B cell (primary cell): ENCODE measurements at regions of chr11 and their contacts with region 1.

Region 1: GRCh38 chr11:78574386-78575381 is at the start of gene NARS2:
- DNase-seq: peak; percentile 97
- ATAC-seq: peak; percentile 98
- H3K4me3 ChIP-seq: peak within 1 kb of the TSS; percentile 67 to 96 (median 79)
- H3K4me3 Mint-ChIP-seq: peak within 1 kb of the TSS; percentile 100
- H3K27ac ChIP-seq: peak within 1 kb of the TSS; percentile 80 to 92
- H3K27ac Mint-ChIP-seq: peak within 1 kb of the TSS; percentile 98
- H3K4me1 ChIP-seq: peaks cover 27 to 30% of the 10 kb centered on the region in 2 donors
- H3K4me1 Mint-ChIP-seq: peaks cover 47% of the 10 kb centered on the region
- H3K27me3 ChIP-seq: no peaks in the 10 kb centered on the region
- H3K27me3 Mint-ChIP-seq: no peaks in the 10 kb centered on the region
- CTCF ChIP-seq: no peak
- total RNA-seq, gene NARS2: 14.6 and 16.0 TPM in 2 replicates

Region 2: DNA sequence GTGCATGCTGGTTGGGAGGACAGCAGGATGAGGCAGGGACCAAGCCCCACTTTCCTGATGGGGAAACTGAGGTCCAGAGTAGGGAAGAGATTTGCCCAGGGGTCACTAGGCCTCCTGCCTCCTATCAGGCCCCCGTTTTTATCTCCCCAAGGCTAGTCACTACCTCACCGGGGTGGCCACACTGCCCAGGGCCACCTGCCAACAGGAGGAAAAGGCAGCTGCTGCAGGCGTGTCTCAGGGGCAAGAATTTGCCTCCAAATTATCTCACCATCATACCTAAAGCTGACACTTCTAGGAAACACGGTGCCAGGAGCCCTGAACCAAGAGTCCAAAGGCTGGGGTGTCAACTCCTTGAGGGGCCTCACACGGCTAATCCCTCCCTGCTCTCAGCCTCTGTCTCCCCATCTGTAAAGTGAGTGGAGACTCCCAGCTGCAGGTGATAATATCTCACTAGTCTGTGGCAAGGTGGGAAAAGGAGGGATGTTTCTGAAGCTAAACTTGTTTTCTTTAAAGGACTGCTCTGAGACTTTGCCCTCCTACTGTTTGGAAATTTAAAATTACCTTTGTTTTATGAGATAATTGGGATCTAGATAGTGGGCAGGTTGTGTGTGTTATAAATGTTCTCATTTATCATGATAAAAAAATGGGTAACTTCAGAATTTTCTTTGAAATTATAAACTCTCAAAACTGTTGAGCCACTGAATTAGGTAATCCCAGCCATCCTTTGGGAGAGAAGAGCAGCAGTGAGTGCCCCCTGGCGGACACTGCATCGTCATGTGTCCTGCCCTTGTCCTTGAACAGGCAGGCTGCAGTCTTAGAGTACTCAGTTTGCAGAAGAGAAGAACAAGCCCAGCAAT is 1386.7 kb before region 1 on chr11:
- CTCF ChIA-PET with region 1: no interaction called
- POLR2A ChIA-PET with region 1: no interaction called
- intact Hi-C with region 1: no loop called
- DNase-seq: peak; percentile 58
- ATAC-seq: peak; percentile 43
- H3K4me3 ChIP-seq: no peak overlapping the region
- H3K4me3 Mint-ChIP-seq: no peak overlapping the region
- H3K27ac ChIP-seq: no peak overlapping the region
- H3K27ac Mint-ChIP-seq: no peak overlapping the region
- H3K4me1 ChIP-seq: no peaks in the 10 kb centered on the region
- H3K4me1 Mint-ChIP-seq: no peaks in the 10 kb centered on the region
- H3K27me3 ChIP-seq: no peaks in the 10 kb centered on the region
- H3K27me3 Mint-ChIP-seq: no peaks in the 10 kb centered on the region
- CTCF ChIP-seq: peak; percentile 82

Region 3: DNA sequence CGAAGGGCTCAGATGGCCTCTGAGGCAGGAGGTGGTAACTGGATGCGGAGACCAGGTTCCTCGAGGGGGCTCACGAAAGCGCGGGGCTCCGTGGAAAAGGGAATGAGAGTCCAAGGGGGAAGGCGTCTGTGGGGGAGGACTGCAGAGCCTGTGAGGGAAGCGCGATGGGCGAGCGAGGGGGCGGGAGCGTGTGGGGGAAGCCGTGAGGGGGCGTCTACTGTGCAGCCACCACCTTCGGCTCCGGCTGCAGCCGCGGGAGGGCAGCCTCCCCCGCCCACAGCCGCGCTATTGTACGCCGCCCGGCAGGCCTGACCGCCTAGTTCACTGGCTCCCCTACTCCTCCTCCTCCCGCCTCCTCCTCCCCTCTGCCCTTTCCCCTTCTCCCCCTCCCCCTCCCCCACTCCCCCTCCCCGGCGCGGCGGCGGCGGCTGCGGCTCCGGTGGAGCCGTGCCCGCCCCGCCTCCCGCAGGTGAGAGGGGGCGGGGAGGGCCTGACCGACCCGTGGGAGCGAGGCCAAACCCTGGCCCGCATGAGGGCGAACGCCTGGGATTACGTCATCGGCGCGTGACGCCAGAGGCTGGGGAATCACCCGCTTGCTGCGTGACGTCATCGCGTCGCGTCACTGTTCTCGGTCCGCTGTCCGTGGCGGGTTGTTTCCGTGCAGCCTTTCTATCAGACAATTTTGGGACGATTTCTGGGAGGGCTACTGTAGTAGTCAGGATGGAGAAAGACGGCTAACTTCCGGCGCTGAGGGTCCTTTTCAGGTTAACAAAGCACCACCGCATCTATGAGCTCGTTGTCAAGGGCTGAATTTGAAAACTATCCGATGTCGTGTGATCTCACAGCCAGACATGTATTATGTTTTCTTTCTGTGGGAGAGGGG is 1100.6 kb before region 1 on chr11 and contains the start of gene PAK1:
- CTCF ChIA-PET with region 1: no interaction called
- POLR2A ChIA-PET with region 1: no interaction called
- intact Hi-C with region 1: loop called (anchors 10 kb)
- DNase-seq: peak; percentile 99
- ATAC-seq: peak; percentile 79
- H3K4me3 ChIP-seq: peak within 1 kb of the TSS; percentile 31 to 74 (median 64)
- H3K4me3 Mint-ChIP-seq: peak within 1 kb of the TSS; percentile 90
- H3K27ac ChIP-seq: peak within 1 kb of the TSS; percentile 61 to 64
- H3K27ac Mint-ChIP-seq: peak within 1 kb of the TSS; percentile 86
- H3K4me1 ChIP-seq: peaks cover 13% of the 10 kb centered on the region in 2 donors
- H3K4me1 Mint-ChIP-seq: peaks cover 17% of the 10 kb centered on the region
- H3K27me3 ChIP-seq: peaks cover 0 to 4% (median 2%) of the 10 kb centered on the region in 4 experiments
- H3K27me3 Mint-ChIP-seq: peaks cover 6% of the 10 kb centered on the region
- CTCF ChIP-seq: peak; percentile 40
- total RNA-seq, gene PAK1: 18.6 and 23.4 TPM in 2 replicates

Region 4: GRCh38 chr11:77820563-77821348 is 753.9 kb before region 1 on chr11 and contains the starts of genes AAMDC and RSF1:
- CTCF ChIA-PET with region 1: no interaction called
- POLR2A ChIA-PET with region 1: no interaction called
- intact Hi-C with region 1: loop called (anchors 1 kb)
- DNase-seq: peak; percentile 98
- ATAC-seq: peak; percentile 83
- H3K4me3 ChIP-seq: peak within 1 kb of the TSS; percentile 77 to 98 (median 94)
- H3K4me3 Mint-ChIP-seq: peak within 1 kb of the TSS; percentile 100
- H3K27ac ChIP-seq: peak within 1 kb of the TSS; percentile 81 to 83
- H3K27ac Mint-ChIP-seq: peak within 1 kb of the TSS; percentile 95
- H3K4me1 ChIP-seq: peaks cover 14 to 26% of the 10 kb centered on the region in 2 donors
- H3K4me1 Mint-ChIP-seq: peaks cover 36% of the 10 kb centered on the region
- H3K27me3 ChIP-seq: no peaks in the 10 kb centered on the region
- H3K27me3 Mint-ChIP-seq: no peaks in the 10 kb centered on the region
- CTCF ChIP-seq: peak; percentile 73
- total RNA-seq, gene AAMDC: 4.6 and 7.5 TPM in 2 replicates
- total RNA-seq, gene RSF1: 100 and 104 TPM in 2 replicates

Region 5: DNA sequence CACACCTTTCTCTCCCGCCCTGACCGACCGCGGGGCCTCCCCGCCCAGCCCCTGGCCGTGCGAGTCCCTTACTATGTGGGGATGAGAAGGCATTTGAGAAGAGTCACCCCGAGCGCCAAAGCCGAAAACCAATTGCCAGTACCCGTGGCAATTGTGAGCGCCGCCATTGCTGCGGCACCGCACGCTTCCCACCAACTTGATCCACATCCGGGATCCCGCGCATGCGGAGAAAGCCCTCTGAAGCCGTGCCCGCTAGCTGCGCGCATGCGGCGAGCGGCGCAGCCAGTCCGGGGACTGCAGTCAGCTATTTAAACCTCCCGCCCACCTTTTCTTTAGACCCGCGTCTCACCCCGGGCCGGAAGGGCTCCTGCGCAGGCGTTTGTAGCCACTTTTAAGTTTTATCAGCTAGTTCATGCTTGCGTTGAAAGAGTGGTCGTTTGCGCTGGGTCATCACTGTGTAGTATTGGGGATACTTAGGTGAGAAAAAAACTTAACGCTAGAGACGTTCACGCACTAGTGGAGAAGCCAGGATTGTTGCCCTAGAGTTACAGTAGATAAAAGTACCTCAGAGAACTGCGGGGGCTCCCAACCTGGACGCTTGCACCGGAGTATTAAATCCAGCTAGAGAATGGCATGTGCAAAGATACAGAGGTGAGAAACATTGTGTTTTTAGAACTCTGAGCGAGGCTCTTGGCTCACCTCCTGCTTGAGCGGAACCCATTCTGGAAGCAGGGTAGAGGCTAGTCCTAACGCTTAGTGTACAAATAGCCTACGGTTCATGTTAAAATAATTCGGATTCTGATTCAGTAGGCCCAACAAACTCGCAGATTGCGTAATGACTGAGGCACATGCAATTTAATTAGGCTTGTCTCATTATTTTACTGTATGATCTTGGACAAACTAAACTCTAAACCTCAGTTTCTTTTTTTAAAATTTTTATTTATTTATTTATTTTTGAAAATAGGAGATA is 435.0 kb before region 1 on chr11 and contains the start of gene ALG8:
- CTCF ChIA-PET with region 1: interaction called, 4 read pairs
- POLR2A ChIA-PET with region 1: interaction called, 5 read pairs
- intact Hi-C with region 1: loop called (anchors 2 kb)
- DNase-seq: peak; percentile 96
- ATAC-seq: peak; percentile 95
- H3K4me3 ChIP-seq: peak within 1 kb of the TSS; percentile 77 to 97 (median 85)
- H3K4me3 Mint-ChIP-seq: peak within 1 kb of the TSS; percentile 99
- H3K27ac ChIP-seq: peak within 1 kb of the TSS; percentile 63 to 86
- H3K27ac Mint-ChIP-seq: peak within 1 kb of the TSS; percentile 97
- H3K4me1 ChIP-seq: peaks cover 25 to 36% of the 10 kb centered on the region in 2 donors
- H3K4me1 Mint-ChIP-seq: peaks cover 44% of the 10 kb centered on the region
- H3K27me3 ChIP-seq: no peaks in the 10 kb centered on the region
- H3K27me3 Mint-ChIP-seq: no peaks in the 10 kb centered on the region
- CTCF ChIP-seq: no peak
- total RNA-seq, gene ALG8: 28.5 and 35.3 TPM in 2 replicates

Region 6: GRCh38 chr11:78188286-78189173 is 386.2 kb before region 1 on chr11 and contains the starts of genes KCTD21 and USP35:
- CTCF ChIA-PET with region 1: interaction called, 5 read pairs
- POLR2A ChIA-PET with region 1: no interaction called
- intact Hi-C with region 1: loop called (anchors 1 kb)
- DNase-seq: peak; percentile 93
- ATAC-seq: peak; percentile 93
- H3K4me3 ChIP-seq: peak within 1 kb of the TSS; percentile 67 to 96 (median 90)
- H3K4me3 Mint-ChIP-seq: peak within 1 kb of the TSS; percentile 100
- H3K27ac ChIP-seq: peak within 1 kb of the TSS; percentile 55 to 77
- H3K27ac Mint-ChIP-seq: peak within 1 kb of the TSS; percentile 93
- H3K4me1 ChIP-seq: peaks cover 24 to 28% of the 10 kb centered on the region in 2 donors
- H3K4me1 Mint-ChIP-seq: peaks cover 45% of the 10 kb centered on the region
- H3K27me3 ChIP-seq: no peaks in the 10 kb centered on the region
- H3K27me3 Mint-ChIP-seq: no peaks in the 10 kb centered on the region
- CTCF ChIP-seq: no peak
- total RNA-seq, gene KCTD21: 6.3 and 8.0 TPM in 2 replicates
- total RNA-seq, gene USP35: 4.5 and 6.0 TPM in 2 replicates

Region 7: DNA sequence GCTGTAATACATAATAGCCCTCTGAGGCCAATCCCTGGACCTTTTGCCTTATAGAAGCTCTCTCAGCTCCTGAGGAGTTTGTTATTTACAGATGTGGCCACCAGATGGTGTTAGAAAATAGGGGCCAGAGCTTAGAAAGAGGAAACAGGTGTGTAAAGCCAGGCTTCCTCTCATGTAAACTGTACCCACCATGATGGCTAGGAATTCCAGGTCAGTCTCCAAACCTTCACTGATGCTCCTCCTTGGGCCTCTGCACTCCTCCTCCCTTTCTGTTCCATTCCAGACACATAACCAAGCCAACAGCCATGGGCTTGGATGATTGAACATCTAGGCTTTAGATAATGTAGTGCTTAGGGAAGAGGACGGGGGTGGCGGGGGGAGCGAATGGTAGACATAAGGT is 346.2 kb before region 1 on chr11:
- CTCF ChIA-PET with region 1: interaction called, 13 read pairs
- POLR2A ChIA-PET with region 1: no interaction called
- intact Hi-C with region 1: no loop called
- DNase-seq: peak; percentile 73
- ATAC-seq: peak; percentile 79
- H3K4me3 ChIP-seq: no peak overlapping the region
- H3K4me3 Mint-ChIP-seq: no peak overlapping the region
- H3K27ac ChIP-seq: peak overlapping the region in 1 of 2 donors; percentile 2
- H3K27ac Mint-ChIP-seq: no peak overlapping the region
- H3K4me1 ChIP-seq: peaks cover 38 to 42% of the 10 kb centered on the region in 2 donors
- H3K4me1 Mint-ChIP-seq: peaks cover 52% of the 10 kb centered on the region
- H3K27me3 ChIP-seq: no peaks in the 10 kb centered on the region
- H3K27me3 Mint-ChIP-seq: no peaks in the 10 kb centered on the region
- CTCF ChIP-seq: peak; percentile 78

Region 8: DNA sequence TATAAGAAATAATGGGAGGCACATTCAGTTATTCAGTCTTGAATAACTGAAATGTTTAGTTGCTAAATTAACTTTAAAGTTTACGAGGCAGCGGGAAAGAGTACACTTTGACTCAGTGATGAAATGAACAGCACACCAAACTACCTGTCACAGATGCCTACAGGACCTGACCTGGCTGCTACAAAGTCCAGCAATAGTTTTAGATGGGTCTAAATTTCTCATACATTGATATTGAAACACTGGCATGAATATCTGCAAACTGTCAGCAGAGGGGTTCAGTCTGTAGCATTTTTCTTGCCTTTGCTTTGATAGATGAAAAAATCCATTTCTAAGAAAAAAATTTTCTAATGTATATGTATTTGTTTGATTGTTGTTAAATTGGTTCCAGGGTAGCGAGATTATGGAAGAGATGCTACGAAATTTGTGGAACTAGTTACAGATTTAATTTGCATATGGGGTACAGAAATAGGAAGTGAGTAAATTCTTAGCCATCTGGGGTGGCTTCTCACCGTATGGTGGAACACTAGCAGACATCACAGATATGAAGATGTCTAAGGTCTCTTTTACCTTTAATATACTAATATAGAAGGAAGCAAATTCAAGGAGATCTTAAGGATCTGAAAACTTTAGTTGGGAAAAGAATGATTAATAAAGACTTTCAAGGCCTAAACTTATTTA is 136.2 kb before region 1 on chr11:
- CTCF ChIA-PET with region 1: no interaction called
- POLR2A ChIA-PET with region 1: no interaction called
- intact Hi-C with region 1: loop called (anchors 1 kb)
- DNase-seq: peak; percentile 79
- ATAC-seq: peak; percentile 96
- H3K4me3 ChIP-seq: no peak overlapping the region
- H3K4me3 Mint-ChIP-seq: peak overlapping the region; percentile 18
- H3K27ac ChIP-seq: peak overlapping the region; percentile 28 to 64
- H3K27ac Mint-ChIP-seq: peak overlapping the region; percentile 46
- H3K4me1 ChIP-seq: peaks cover 15 to 21% of the 10 kb centered on the region in 2 donors
- H3K4me1 Mint-ChIP-seq: peaks cover 27% of the 10 kb centered on the region
- H3K27me3 ChIP-seq: no peaks in the 10 kb centered on the region
- H3K27me3 Mint-ChIP-seq: no peaks in the 10 kb centered on the region
- CTCF ChIP-seq: no peak